A673 (cell line): ENCODE measurements at regions of chr3 and their contacts with region 1.

Region 1: DNA sequence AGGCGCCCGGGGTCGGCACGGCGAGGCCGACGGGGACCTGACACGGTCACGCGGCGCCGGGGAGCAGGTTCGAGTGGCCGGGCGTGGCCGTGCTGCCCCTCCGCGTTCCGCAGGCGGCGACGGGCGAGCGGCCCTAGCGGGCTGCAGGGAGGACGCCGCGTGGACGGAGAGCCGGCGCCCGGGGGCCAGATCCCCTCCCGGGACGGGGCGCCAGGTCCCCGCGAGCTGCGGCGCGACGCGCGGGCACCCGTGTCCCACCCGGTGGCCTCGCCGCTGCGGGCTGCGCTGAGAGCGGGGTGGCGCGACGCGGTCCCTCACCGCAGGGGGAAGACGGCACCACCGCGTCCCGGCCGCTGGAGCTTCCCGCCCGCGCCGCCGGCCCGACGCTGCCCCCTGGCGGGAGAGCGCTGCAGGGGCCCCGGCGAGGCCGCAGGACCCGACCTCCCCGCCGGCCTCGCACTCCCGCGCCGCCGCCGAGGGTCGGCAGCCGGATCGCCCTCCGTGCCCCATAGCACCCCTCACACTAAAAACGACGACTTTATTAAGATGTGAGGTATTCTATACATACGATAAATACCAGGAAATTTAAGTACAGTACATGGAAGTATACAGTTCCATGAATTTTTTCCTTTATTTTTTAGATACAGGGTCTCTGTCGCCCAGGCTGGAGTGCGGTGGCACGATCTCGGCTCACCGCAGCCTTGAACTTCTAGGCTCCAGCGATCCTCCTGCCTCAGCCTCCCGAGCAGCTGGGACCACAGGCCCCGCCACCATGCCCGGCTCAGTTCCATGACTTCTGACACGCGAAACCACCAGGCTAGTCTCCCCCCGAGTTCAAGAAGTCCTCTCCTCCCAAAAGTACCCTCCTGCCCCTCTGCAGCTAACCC is 1.3 kb upstream of the PIGZ start:
- DNase-seq: peak; percentile 76
- H3K4me3 ChIP-seq: peak overlapping the region; percentile 75
- H3K27ac ChIP-seq: peak overlapping the region; percentile 34
- H3K4me1 ChIP-seq: no peaks in the 10 kb centered on the region
- H3K27me3 ChIP-seq: no peaks in the 10 kb centered on the region
- CTCF ChIP-seq: peak; percentile 50; the same call in 1 of the 2 replicates

Region 2: DNA sequence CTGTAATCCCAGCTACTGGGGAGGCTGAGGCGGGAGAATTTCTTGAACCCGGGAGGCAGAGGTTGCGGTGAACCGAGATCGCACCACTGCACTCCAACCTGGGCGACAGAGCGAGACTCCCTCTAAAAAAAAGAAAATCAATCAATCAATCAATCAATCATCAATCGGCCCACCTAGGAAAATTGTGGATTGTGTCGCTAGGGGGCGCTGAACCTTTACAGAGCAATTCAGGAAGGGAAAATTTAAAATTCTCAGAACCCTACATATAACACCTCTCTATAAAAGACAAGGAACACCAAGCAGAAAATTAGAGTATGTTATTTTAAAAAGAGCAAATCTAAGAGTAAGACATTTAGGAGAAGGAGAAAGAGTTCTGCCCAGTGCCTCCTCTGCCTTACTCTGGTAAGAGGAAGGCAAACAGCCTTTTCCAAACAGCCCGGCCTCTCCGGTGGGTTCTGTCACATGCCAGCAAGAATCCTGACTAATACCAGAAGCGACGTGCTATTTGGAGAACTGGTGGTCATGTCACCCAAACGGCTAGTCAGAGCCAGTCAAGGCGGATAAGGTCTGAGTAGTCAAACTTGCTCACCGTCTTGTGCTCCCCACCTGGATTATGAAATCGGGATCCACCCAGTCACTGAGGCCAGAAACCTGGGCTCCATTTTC is 432.5 kb before region 1 on chr3:
- CTCF ChIA-PET with region 1: no interaction called
- POLR2A ChIA-PET with region 1: no interaction called
- intact Hi-C with region 1: loop called (anchors 10 kb)
- DNase-seq: peak; percentile 51
- H3K4me3 ChIP-seq: no peak overlapping the region
- H3K27ac ChIP-seq: no peak overlapping the region
- H3K4me1 ChIP-seq: no peaks in the 10 kb centered on the region
- H3K27me3 ChIP-seq: no peaks in the 10 kb centered on the region
- CTCF ChIP-seq: peak; percentile 85

Region 3: GRCh38 chr3:196837819-196838420 is 132.0 kb before region 1 on chr3:
- CTCF ChIA-PET with region 1: no interaction called
- POLR2A ChIA-PET with region 1: no interaction called
- intact Hi-C with region 1: loop called (anchors 2 kb)
- DNase-seq: peak; percentile 76
- H3K4me3 ChIP-seq: no peak overlapping the region
- H3K27ac ChIP-seq: no peak overlapping the region
- H3K4me1 ChIP-seq: no peaks in the 10 kb centered on the region
- H3K27me3 ChIP-seq: no peaks in the 10 kb centered on the region
- CTCF ChIP-seq: peak; percentile 89

Region 4: DNA sequence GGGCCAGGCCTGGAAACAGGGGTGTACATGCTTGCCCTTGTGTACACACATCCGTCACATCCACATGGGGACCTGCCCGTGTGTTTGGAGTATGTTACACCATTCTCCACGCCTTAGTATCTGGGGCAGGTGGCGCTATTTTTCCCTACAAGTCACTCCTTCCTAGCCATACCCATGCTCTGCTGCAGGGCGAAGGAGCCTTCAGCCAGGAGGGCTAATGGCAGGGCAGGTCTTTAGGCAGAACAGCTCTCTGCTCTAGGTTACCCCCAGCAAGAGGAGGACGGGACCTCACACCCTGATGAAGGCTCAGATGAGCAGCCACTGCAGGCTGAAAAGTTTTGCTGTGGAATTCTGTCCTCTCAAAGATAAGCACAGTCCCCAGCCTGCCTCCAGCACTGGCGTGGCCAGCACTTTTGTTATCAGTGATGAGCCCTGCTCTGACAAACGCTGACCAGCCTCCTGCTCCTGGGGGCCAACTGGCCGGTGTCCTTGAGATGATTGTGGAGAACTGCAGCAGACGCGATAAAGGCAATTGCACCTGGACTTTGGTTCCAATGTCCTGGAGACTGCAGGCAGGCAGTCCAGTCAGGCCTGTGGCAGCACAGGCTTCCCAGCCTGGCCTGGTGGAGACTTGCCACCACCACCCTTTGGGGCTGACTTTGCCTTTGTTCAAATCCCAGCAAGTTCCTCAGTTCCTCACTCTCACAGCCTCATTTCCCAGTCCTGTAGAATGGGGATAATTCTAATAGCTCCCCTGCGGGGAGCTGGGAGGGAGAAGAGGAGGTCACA is 18.5 kb after region 1 on chr3:
- CTCF ChIA-PET with region 1: no interaction called
- POLR2A ChIA-PET with region 1: no interaction called
- intact Hi-C with region 1: no loop called
- DNase-seq: no peak
- H3K4me3 ChIP-seq: no peak overlapping the region
- H3K27ac ChIP-seq: no peak overlapping the region
- H3K4me1 ChIP-seq: no peaks in the 10 kb centered on the region
- H3K27me3 ChIP-seq: no peaks in the 10 kb centered on the region
- CTCF ChIP-seq: peak; percentile 52

Region 5: GRCh38 chr3:197083486-197083885 is 113.6 kb after region 1 on chr3:
- CTCF ChIA-PET with region 1: no interaction called
- POLR2A ChIA-PET with region 1: no interaction called
- intact Hi-C with region 1: no loop called
- DNase-seq: peak; percentile 22
- H3K4me3 ChIP-seq: no peak overlapping the region
- H3K27ac ChIP-seq: no peak overlapping the region
- H3K4me1 ChIP-seq: peaks cover 6% of the 10 kb centered on the region
- H3K27me3 ChIP-seq: no peaks in the 10 kb centered on the region
- CTCF ChIP-seq: no peak

Region 6: DNA sequence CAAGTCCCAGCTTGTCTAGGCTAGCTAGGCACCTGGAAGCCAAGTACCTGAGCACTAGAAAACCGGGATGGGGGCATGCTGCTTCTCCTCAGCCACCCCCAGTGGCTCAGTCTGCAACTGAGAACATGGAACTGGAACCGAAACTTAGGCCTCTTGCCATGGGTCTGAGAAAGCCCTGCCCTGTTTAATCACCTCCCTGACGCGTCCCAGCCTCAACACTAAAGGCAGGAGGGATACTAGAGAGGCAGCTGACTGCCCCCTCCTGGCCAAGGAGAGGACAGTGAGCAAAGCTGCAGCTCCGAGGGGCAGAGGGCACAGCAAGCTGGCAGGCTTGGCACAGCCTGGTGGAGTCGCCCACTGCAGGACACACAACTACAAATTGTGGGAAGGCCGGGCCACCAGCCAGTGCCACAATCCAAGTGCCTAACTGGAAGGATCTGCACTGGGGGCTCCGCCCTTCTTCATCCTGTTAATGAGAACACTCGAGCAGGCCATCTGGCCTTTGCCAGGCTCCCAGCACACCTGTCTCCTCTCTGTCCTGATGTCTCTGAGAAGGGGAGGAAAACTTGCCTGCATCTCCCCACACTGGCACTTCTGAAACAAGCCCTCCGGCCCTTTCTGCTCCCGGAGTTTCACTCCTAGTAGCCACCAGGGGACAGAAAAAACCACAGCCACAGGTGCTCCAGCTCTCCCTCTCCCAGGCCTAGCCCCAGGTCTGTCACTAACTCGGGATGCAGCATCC is 532.1 kb after region 1 on chr3:
- CTCF ChIA-PET with region 1: no interaction called
- POLR2A ChIA-PET with region 1: no interaction called
- intact Hi-C with region 1: loop called (anchors 10 kb)
- DNase-seq: peak; percentile 81
- H3K4me3 ChIP-seq: no peak overlapping the region
- H3K27ac ChIP-seq: no peak overlapping the region
- H3K4me1 ChIP-seq: peaks cover 17% of the 10 kb centered on the region
- H3K27me3 ChIP-seq: no peaks in the 10 kb centered on the region
- CTCF ChIP-seq: peak; percentile 72